Spleen (tissue), 13 donors: ENCODE measurements at regions of chr1 and their contacts with region 1.

Region 1: DNA sequence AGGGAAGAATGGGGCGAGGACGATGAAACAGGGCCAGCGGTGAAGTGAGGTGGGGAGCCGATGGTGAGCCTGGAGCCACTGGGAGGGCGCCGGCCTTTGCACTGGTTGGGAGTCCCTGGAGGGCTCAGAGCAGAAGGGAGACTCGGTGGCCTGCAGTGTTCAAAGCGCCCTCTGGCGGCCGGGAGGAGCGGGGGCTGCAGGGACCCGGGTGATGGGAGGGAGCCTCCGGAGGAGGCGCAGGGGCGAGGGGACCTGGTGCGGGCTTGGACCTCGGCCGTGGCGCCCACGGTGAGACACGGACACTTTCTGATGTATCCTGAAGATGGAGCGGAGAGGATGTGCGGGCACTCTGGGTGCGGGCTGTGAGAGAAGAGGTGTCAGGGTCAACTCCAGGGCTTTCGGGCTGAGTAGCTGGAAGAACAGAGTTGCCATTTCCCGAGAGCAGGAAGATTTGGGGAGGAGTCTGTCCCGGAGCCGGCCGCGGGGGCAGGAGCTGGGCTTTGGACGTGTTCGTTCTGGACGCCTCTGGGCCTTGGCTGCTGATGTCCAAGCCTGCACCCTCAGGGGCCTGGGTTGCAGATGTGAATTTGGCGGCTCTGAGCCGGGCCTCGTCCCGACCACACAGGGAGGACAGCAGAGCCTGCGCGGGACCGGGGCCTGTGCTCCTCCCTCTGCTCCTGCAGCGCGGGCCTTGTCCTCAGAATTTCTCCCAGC is 29.7 kb downstream of the HEYL start:
- DNase-seq: peak; percentile 91
- H3K4me3 ChIP-seq: peak overlapping the region in 1 of 8 donors; percentile 2
- H3K27ac ChIP-seq: no peak overlapping the region
- H3K4me1 ChIP-seq: peaks cover 0 to 15% (median 0%) of the 10 kb centered on the region in 6 donors
- H3K27me3 ChIP-seq: peaks cover 0 to 26% (median 2%) of the 10 kb centered on the region in 7 donors
- CTCF ChIP-seq: peak in 9 of 11 experiments; percentile 32 to 90 (median 80)
- POLR2A ChIP-seq: no peak

Region 2: GRCh38 chr1:39653546-39654031 is 43.8 kb after region 1 on chr1:
- intact Hi-C with region 1: loop called (anchors 2 kb)
- DNase-seq: peak; percentile 89
- H3K4me3 ChIP-seq: peak overlapping the region in 1 of 8 donors; percentile 3
- H3K27ac ChIP-seq: no peak overlapping the region
- H3K4me1 ChIP-seq: peaks cover 0 to 11% (median 3%) of the 10 kb centered on the region in 6 donors
- H3K27me3 ChIP-seq: peaks cover 0 to 13% (median 0%) of the 10 kb centered on the region in 7 donors
- CTCF ChIP-seq: peak; percentile 31 to 87 (median 76)
- POLR2A ChIP-seq: no peak

Region 3: DNA sequence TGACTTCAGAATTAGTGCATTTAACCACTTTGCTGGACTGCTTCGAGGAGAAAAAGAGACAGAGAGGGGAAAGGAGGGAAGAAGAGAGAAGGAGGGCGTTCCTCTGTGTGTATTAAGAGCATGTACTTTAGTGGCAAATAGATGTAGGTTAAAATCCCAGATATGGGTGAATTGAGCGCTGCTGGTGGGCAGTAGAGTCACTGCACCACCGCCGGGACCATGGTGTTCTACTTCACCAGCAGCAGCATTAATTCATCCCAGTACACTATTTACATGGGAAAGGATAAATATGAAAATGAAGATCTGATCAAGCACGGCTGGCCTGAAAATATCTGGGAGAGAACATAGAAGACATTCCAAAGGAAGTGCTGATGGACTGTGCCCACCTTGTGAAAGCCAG is 108.0 kb after region 1 on chr1:
- intact Hi-C with region 1: loop called (anchors 5 kb)
- DNase-seq: no peak
- H3K4me3 ChIP-seq: no peak overlapping the region
- H3K27ac ChIP-seq: no peak overlapping the region
- H3K4me1 ChIP-seq: peaks cover 0 to 10% (median 3%) of the 10 kb centered on the region in 6 donors
- H3K27me3 ChIP-seq: peaks cover 0 to 45% (median 0%) of the 10 kb centered on the region in 7 donors
- CTCF ChIP-seq: no peak
- POLR2A ChIP-seq: no peak